Breast epithelium (tissue), 4 donors: ENCODE measurements at regions of chr1 and their contacts with region 1.

Region 1: DNA sequence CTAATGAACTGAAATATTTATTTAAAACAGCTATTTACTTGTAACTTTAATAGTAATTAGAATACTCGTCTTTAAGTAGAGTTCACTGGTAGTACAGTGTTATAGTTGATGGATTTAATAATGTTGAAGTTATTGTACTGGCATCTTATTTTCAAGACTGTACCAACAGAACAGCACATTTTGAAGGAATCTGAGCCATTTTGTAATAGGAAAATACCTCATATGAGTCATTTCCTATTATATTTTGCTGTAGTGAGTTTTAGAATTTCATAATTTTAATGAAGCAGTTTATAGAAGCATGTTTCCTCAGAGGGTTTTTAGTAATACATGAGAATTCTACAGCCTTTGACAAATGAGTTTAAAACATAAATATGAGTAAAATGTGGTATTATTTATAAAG is 258.3 kb downstream of the OLFM3 start:
- DNase-seq: no peak
- H3K4me3 ChIP-seq: no peak overlapping the region
- H3K27ac ChIP-seq: no peak overlapping the region
- H3K4me1 ChIP-seq: no peaks in the 10 kb centered on the region
- H3K27me3 ChIP-seq: no peaks in the 10 kb centered on the region
- CTCF ChIP-seq: no peak
- POLR2A ChIP-seq: no peak

Region 2: GRCh38 chr1:103477101-103477500 is 1738.6 kb after region 1 on chr1:
- intact Hi-C with region 1: loop called (anchors 10 kb)
- DNase-seq: no peak
- H3K4me3 ChIP-seq: no peak overlapping the region
- H3K27ac ChIP-seq: no peak overlapping the region
- H3K4me1 ChIP-seq: no peaks in the 10 kb centered on the region
- H3K27me3 ChIP-seq: no peaks in the 10 kb centered on the region
- CTCF ChIP-seq: no peak
- POLR2A ChIP-seq: no peak